ENCODE measurements at regions of chr12 and their contacts with region 1.

Region 1: GRCh38 chr12:57088459-57089248 is at the start of gene NAB2:
- DNase-seq: peak; percentile 92
- H3K4me3 Mint-ChIP-seq: peak within 1 kb of the TSS; percentile 91
- H3K27ac Mint-ChIP-seq: peak within 1 kb of the TSS; percentile 99
- H3K4me1 Mint-ChIP-seq: peaks cover 61% of the 10 kb centered on the region
- H3K27me3 Mint-ChIP-seq: no peaks in the 10 kb centered on the region
- total RNA-seq, gene NAB2: 18.4 to 19.1 TPM

Region 2: GRCh38 chr12:56636675-56637540 is 451.7 kb before region 1 on chr12:
- CTCF ChIA-PET with region 1: interaction called, 3 read pairs
- intact Hi-C with region 1: loop called (anchors 5 kb)
- DNase-seq: peak; percentile 97
- H3K4me3 Mint-ChIP-seq: peak overlapping the region; percentile 86
- H3K27ac Mint-ChIP-seq: peak overlapping the region; percentile 91
- H3K4me1 Mint-ChIP-seq: peaks cover 62% of the 10 kb centered on the region
- H3K27me3 Mint-ChIP-seq: no peaks in the 10 kb centered on the region

Region 3: GRCh38 chr12:56751712-56752598 is 336.7 kb before region 1 on chr12 and contains the start of gene PRIM1:
- CTCF ChIA-PET with region 1: interaction called, 5 read pairs
- intact Hi-C with region 1: loop called (anchors 5 kb)
- DNase-seq: peak; percentile 90
- H3K4me3 Mint-ChIP-seq: peak within 1 kb of the TSS; percentile 98
- H3K27ac Mint-ChIP-seq: peak within 1 kb of the TSS; percentile 99
- H3K4me1 Mint-ChIP-seq: peaks cover 40% of the 10 kb centered on the region
- H3K27me3 Mint-ChIP-seq: no peaks in the 10 kb centered on the region
- total RNA-seq, gene PRIM1: 74.9 to 75.0 TPM

Region 4: GRCh38 chr12:57063991-57064685 is 24.5 kb before region 1 on chr12:
- CTCF ChIA-PET with region 1: interaction called, 292 read pairs
- intact Hi-C with region 1: loop called (anchors 1 kb)
- DNase-seq: peak; percentile 81
- H3K4me3 Mint-ChIP-seq: peak overlapping the region; percentile 68
- H3K27ac Mint-ChIP-seq: peak overlapping the region; percentile 96
- H3K4me1 Mint-ChIP-seq: peaks cover 66% of the 10 kb centered on the region
- H3K27me3 Mint-ChIP-seq: no peaks in the 10 kb centered on the region

Region 5: DNA sequence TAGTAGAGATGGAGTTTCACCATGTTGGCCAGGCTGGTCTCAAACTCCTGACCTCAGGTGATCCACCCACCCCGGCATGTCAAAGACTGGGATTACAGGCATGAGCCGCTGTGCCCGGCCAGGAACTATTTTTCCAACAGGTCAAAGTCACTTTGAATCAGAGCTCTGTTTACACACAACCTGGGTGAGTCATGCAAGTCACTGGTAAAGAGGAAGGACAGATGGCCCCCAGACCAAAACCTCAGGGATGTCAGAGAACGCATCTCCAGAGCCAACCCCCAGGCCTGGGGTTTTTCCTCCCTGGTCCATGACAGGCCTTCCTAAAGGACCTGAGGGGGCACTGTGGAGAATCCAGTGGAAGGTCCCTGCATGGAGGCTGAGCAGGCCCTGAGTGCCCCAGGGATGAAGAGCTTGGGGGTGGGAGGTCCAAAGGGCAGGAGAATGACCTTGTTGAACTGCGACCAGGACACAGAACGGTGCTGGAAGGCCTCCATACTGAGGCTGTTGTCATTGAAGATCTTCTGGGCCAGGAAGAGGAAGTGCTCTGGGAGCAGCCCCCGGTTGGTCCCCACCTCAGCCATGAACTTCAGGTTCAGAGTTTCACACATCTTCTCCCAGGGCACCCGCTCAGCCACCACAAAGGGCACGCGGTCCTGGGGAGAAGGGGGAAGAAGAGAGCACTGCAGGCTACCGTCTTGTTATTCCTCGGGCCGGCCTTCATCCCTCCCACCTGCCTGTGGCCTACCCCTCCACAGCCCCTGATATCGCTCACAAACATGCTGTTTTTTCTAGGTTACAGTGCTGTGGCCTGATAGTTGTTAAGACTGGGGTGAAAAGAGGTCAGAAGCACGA is 13.4 kb after region 1 on chr12:
- CTCF ChIA-PET with region 1: interaction called, 13 read pairs
- intact Hi-C with region 1: no loop called
- DNase-seq: no peak
- H3K4me3 Mint-ChIP-seq: no peak overlapping the region
- H3K27ac Mint-ChIP-seq: peak overlapping the region; percentile 71
- H3K4me1 Mint-ChIP-seq: peaks cover 44% of the 10 kb centered on the region
- H3K27me3 Mint-ChIP-seq: no peaks in the 10 kb centered on the region

Measured in activated naive CD4-positive, alpha-beta T cell treated with anti-CD3 and anti-CD28 coated beads for 36 hours (primary cell).